Brain microvascular endothelial cell (primary cell): ENCODE measurements at regions of chr17 and their contacts with region 1.

Region 1: GRCh38 chr17:59769891-59770290 is 62.4 kb downstream of the VMP1 start:
- DNase-seq: no peak
- H3K4me3 ChIP-seq: no peak overlapping the region
- H3K27ac ChIP-seq: peak overlapping the region; percentile 33
- H3K27me3 ChIP-seq: no peaks in the 10 kb centered on the region
- CTCF ChIP-seq: no peak

Region 2: DNA sequence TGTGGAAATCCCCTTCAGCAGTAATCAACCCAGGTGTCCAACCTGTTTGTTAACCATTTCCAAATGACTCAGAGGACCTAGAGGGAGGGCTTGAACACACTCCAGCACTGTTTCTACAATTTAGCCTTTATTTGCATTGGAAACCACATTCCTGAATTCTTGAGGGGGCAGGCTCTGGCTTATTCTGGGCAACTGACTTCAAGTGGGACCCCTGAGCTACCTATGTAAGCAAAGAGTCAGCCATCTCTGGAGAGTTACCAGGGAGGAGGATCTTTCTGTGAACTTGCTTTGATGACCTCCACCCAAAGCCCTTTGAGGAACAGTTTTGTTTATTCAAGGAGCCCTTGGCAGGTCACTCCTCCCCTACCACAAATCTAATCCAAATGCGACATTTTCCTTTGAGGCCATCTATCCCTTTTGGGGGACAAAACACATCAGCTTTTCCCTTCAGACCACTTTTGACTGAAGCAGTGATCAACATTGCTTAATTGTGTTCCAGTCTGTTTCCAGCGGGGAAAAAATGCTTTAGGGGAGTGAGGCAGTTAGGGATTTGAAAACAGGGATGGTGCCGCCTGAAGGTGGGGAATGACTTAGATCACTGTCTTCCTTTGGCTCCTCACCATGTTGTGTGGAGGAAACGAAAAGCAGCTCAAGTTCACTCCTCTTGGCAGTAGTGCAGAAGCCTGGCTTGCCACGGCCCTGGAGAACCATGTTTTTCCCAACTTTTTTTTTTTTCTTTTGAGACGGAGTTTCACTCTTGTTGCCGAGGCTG is 76.7 kb after region 1 on chr17:
- in situ Hi-C with region 1: loop called (anchors 10 kb)
- DNase-seq: peak; percentile 66
- H3K4me3 ChIP-seq: no peak overlapping the region
- H3K27ac ChIP-seq: peak overlapping the region; percentile 99
- H3K27me3 ChIP-seq: no peaks in the 10 kb centered on the region
- CTCF ChIP-seq: no peak